ENCODE measurements at regions of chr11 and their contacts with region 1.

Region 1: DNA sequence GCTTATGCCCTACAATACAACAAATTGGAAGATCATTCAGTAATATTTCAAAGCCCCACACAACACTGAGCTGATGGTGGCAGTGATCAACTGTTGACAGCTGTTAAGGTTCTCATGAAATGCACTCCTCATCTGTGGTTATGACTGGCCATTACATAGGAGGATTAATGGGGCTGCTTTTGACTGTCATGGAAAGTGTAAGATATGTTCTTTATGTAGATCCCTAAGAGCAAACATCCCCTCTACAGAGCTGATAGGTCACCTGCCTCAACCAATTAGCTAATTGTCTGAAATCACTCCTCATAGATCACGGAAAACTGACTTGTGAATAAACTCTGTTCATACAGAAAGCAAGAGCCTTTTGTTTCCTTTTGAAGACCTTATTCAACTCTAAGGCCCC is 78.1 kb downstream of the GAB2 start:
- DNase-seq: no peak
- H3K4me3 Mint-ChIP-seq: peak overlapping the region; percentile 41
- H3K27ac Mint-ChIP-seq: peak overlapping the region; percentile 97
- H3K4me1 Mint-ChIP-seq: peaks cover 92% of the 10 kb centered on the region
- H3K27me3 Mint-ChIP-seq: no peaks in the 10 kb centered on the region

Region 2: DNA sequence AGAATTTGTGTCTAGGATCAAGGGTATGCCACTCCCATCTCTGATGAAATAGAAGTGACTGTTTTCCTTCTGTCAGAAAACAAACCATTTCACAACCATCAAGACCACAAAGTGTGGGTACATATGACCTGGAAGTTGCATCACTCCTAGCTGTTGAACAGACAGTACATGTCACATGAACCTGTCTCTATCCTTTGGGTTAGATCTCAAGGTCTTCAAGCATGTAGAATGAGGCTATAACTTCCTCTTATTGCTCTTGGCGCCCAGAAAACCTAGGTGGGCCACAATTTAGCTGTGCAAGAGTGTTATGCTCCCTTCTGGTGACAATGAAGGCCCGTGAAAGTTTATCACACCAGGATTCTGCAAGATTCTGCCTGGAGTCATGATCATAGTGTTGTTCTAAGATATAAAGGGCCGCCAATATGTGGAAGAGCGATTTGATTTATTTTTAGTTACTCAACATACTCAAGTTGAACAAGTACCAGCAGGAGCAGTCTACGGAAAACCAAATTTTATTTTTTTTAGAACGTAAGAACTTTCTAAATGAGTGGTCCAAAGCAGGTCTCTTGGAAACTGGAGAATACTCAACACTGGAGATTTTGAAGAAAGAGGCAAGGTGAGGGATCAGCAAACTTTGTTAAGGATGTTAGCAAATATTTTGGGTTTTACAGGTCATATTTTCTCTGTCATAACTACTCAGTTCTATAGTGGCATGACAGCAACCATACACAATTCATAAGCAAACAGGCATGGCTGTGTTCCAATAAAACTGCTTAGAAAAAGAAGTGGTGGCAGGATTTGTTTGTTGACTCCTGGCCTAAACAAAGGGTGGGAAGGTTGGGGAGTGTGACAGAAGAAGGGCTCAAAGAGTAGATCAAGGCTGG is 48.9 kb before region 1 on chr11:
- intact Hi-C with region 1: loop called (anchors 1 kb)
- DNase-seq: peak; percentile 37
- H3K4me3 Mint-ChIP-seq: peak overlapping the region; percentile 31
- H3K27ac Mint-ChIP-seq: peak overlapping the region; percentile 91
- H3K4me1 Mint-ChIP-seq: peaks cover 68% of the 10 kb centered on the region
- H3K27me3 Mint-ChIP-seq: no peaks in the 10 kb centered on the region

Region 3: GRCh38 chr11:78350646-78351165 is 11.2 kb after region 1 on chr11:
- intact Hi-C with region 1: loop called (anchors 1 kb)
- DNase-seq: no peak
- H3K4me3 Mint-ChIP-seq: peak overlapping the region; percentile 64
- H3K27ac Mint-ChIP-seq: peak overlapping the region; percentile 88
- H3K4me1 Mint-ChIP-seq: peaks cover 84% of the 10 kb centered on the region
- H3K27me3 Mint-ChIP-seq: no peaks in the 10 kb centered on the region

Region 4: GRCh38 chr11:78397387-78397786 is 57.9 kb after region 1 on chr11:
- intact Hi-C with region 1: loop called (anchors 5 kb)
- DNase-seq: no peak
- H3K4me3 Mint-ChIP-seq: no peak overlapping the region
- H3K27ac Mint-ChIP-seq: peak overlapping the region; percentile 51
- H3K4me1 Mint-ChIP-seq: peaks cover 69% of the 10 kb centered on the region
- H3K27me3 Mint-ChIP-seq: no peaks in the 10 kb centered on the region

Region 5: DNA sequence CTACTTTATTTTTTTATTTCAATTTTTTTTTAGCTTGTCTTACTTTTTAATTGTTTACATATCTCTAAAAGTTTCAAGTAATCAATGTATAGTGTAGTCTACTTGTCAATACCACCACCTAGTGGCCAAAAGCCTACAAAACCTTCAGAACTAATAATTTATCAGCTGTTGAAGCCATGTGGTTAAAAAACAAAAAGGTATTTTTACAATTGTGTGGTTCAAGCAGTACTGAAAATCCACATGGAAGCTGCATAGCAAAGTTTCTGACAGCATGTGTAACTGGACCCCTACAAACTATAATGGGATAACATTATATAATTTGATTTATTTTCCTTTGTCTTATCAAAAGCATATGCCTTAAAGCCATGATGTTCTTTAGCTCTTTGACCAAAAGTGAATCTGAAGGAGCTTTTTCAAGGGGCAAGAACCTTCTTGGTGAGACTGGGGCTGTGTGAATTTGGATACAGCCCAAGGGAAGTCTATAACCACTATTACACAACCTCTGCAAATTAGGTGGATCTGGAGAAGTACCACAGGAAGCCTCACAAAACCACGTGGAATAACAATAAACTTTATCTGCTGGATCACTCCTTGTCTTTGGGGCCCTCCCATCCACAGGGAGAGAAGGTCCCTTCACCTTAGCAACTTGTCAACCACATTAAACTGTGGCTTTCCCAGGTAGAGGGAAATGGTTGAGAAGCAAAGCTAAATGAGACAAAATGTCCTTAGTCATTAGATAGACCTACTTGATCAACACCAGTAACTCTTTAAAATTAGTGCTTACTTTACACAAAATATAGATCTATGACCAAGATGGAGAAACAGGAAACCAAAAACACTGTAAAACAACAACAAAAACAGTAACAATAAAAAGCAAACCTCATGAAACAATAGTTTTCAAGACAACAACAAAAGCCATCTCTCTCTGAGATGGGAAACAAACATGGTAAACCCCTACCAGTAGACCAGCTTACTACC is 225.3 kb after region 1 on chr11:
- intact Hi-C with region 1: loop called (anchors 5 kb)
- DNase-seq: peak; percentile 26
- H3K4me3 Mint-ChIP-seq: no peak overlapping the region
- H3K27ac Mint-ChIP-seq: peak overlapping the region; percentile 76
- H3K4me1 Mint-ChIP-seq: peaks cover 53% of the 10 kb centered on the region
- H3K27me3 Mint-ChIP-seq: no peaks in the 10 kb centered on the region

Region 6: DNA sequence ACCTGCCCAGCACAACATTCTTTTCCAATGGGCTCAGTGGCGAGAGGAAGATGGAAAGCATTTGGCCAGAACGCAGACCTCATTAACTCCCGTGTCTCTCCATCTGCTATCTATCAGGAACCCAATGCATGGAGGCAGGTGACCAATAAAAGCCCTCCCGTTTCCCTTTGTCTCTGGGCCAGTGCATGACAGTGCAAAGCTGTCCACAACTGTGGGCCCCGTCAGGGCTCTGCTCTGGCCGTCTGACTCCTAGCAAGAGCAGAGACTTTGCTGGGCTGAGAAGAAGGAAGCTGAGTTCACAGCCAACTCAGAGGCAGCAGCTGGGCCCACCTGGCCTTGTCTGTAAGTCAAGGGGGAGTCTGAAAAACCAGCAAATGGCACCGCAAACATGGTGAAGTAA is 923.5 kb after region 1 on chr11:
- intact Hi-C with region 1: no loop called
- DNase-seq: no peak
- H3K4me3 Mint-ChIP-seq: no peak overlapping the region
- H3K27ac Mint-ChIP-seq: no peak overlapping the region
- H3K4me1 Mint-ChIP-seq: no peaks in the 10 kb centered on the region
- H3K27me3 Mint-ChIP-seq: no peaks in the 10 kb centered on the region